MCF 10A (cell line): ENCODE measurements at regions of chr9 and their contacts with region 1.

Region 1: GRCh38 chr9:95875305-95876137 is at the start of gene ERCC6L2:
- DNase-seq: peak; percentile 98
- H3K4me3 Mint-ChIP-seq: no peak within 1 kb of the TSS
- H3K27ac Mint-ChIP-seq: no peak within 1 kb of the TSS
- H3K4me1 Mint-ChIP-seq: peaks cover 6% of the 10 kb centered on the region
- H3K27me3 Mint-ChIP-seq: no peaks in the 10 kb centered on the region
- CTCF ChIP-seq: no peak
- total RNA-seq, gene ERCC6L2: 26.9 and 28.0 TPM in 2 replicates

Region 2: GRCh38 chr9:95726756-95727155 is 148.8 kb before region 1 on chr9:
- CTCF ChIA-PET with region 1: no interaction called
- POLR2A ChIA-PET with region 1: interaction called, 3 read pairs
- intact Hi-C with region 1: loop called (anchors 2 kb)
- DNase-seq: peak; percentile 67
- H3K4me3 Mint-ChIP-seq: no peak overlapping the region
- H3K27ac Mint-ChIP-seq: no peak overlapping the region
- H3K4me1 Mint-ChIP-seq: no peaks in the 10 kb centered on the region
- H3K27me3 Mint-ChIP-seq: no peaks in the 10 kb centered on the region
- CTCF ChIP-seq: peak; percentile 62

Region 3: GRCh38 chr9:95796029-95796428 is 79.5 kb before region 1 on chr9:
- CTCF ChIA-PET with region 1: no interaction called
- POLR2A ChIA-PET with region 1: no interaction called
- intact Hi-C with region 1: no loop called
- DNase-seq: no peak
- H3K4me3 Mint-ChIP-seq: no peak overlapping the region
- H3K27ac Mint-ChIP-seq: no peak overlapping the region
- H3K4me1 Mint-ChIP-seq: peaks cover 25% of the 10 kb centered on the region
- H3K27me3 Mint-ChIP-seq: peaks cover 3% of the 10 kb centered on the region
- CTCF ChIP-seq: no peak

Region 4: GRCh38 chr9:95852059-95853032 is 23.2 kb before region 1 on chr9:
- CTCF ChIA-PET with region 1: no interaction called
- POLR2A ChIA-PET with region 1: interaction called, 78 read pairs
- intact Hi-C with region 1: no loop called
- DNase-seq: peak; percentile 18
- H3K4me3 Mint-ChIP-seq: no peak overlapping the region
- H3K27ac Mint-ChIP-seq: no peak overlapping the region
- H3K4me1 Mint-ChIP-seq: peaks cover 47% of the 10 kb centered on the region
- H3K27me3 Mint-ChIP-seq: no peaks in the 10 kb centered on the region
- CTCF ChIP-seq: no peak

Region 5: DNA sequence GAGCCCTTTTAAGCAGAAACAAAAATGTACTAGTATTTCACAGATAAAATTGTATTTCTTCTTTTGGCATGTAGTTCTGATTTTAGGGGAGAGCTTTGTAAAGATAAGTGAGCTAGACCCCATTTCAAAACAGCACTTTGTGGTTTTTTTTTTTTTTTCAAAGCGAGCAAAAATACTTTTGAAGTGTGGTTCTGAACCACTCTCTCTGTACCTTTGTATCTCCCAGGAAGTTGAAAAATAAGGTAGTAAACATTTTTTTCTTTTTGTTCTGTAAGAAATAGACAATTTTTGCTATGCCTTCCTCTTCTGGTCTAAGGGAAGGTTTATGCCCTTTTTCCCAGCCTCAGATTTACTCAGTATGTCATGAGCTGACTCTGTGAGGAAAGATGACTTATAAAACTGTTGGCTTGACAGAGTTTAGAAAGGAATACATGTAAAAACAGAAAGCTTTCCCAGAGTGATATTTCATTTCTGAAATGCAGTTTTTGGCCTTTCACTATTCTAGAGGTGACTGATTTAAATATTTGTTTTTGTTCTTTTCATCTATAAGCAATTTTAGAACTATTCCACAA is 12.5 kb after region 1 on chr9:
- CTCF ChIA-PET with region 1: no interaction called
- POLR2A ChIA-PET with region 1: interaction called, 26 read pairs
- intact Hi-C with region 1: no loop called
- DNase-seq: no peak
- H3K4me3 Mint-ChIP-seq: no peak overlapping the region
- H3K27ac Mint-ChIP-seq: no peak overlapping the region
- H3K4me1 Mint-ChIP-seq: no peaks in the 10 kb centered on the region
- H3K27me3 Mint-ChIP-seq: no peaks in the 10 kb centered on the region
- CTCF ChIP-seq: no peak

Region 6: GRCh38 chr9:95938724-95939123 is 63.2 kb after region 1 on chr9:
- CTCF ChIA-PET with region 1: no interaction called
- POLR2A ChIA-PET with region 1: interaction called, 10 read pairs
- intact Hi-C with region 1: no loop called
- DNase-seq: peak; percentile 5
- H3K4me3 Mint-ChIP-seq: no peak overlapping the region
- H3K27ac Mint-ChIP-seq: no peak overlapping the region
- H3K4me1 Mint-ChIP-seq: peaks cover 14% of the 10 kb centered on the region
- H3K27me3 Mint-ChIP-seq: no peaks in the 10 kb centered on the region
- CTCF ChIP-seq: no peak

Region 7: GRCh38 chr9:95962936-95963335 is 87.4 kb after region 1 on chr9:
- CTCF ChIA-PET with region 1: no interaction called
- POLR2A ChIA-PET with region 1: no interaction called
- intact Hi-C with region 1: no loop called
- DNase-seq: no peak
- H3K4me3 Mint-ChIP-seq: no peak overlapping the region
- H3K27ac Mint-ChIP-seq: no peak overlapping the region
- H3K4me1 Mint-ChIP-seq: no peaks in the 10 kb centered on the region
- H3K27me3 Mint-ChIP-seq: no peaks in the 10 kb centered on the region
- CTCF ChIP-seq: no peak